ENCODE measurements at regions of chr1 and their contacts with region 1.

Region 1: DNA sequence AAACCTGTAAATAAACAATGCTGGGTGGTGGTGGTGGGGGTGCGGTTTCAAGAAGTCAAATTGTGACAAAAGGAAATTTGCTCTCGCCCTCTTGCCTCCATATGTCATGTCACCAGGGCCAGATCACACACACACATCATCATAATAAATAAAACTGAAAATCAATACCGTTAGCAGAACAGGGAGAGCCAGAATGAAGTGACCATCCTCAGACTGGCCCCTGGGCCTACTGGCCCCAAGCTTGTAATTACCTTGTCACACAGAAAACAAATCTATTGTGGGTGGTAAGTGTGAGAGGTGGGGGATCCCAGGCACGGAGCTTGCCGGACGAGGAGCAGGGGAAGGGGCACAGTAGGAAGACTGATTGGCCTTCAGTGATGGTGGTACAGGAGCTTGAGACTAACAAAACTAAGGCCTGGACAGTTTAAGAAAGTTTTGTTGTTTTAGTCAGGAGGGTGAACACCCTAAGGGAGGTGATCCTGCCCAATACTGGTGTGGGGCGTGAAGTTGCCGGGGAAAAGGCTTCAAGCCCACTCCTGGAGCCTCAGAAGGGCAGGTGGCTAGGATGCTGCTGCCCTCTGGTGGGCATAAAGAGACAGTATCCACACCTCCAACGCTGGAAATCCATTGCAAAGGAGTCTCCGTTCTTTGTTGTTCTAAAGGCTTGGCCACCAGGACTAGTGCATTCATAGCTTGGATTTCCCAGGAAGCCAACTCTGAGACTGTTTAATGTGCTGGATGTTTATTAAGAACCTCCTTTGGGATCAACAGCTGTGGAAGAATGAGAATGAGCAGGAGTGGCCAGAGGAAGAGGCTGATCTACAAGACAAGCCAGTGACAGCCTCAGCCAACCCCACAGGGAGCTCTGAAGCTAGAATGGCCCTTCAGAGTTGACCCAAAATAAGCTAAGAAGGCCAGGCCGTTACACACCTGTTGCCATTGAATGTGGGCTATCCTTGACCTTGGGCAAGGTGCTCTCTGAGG is 8.1 kb upstream of the C1orf216 start:
- DNase-seq: peak; percentile 53
- ATAC-seq: peak; percentile 97
- H3K4me3 ChIP-seq: no peak overlapping the region
- H3K27ac ChIP-seq: no peak overlapping the region
- H3K4me1 ChIP-seq: no peaks in the 10 kb centered on the region
- H3K27me3 ChIP-seq: no peaks in the 10 kb centered on the region
- CTCF ChIP-seq: peak; percentile 91
- EP300 ChIP-seq: no peak
- POLR2A ChIP-seq: no peak
- RAD21 ChIP-seq: peak; percentile 79

Region 2: DNA sequence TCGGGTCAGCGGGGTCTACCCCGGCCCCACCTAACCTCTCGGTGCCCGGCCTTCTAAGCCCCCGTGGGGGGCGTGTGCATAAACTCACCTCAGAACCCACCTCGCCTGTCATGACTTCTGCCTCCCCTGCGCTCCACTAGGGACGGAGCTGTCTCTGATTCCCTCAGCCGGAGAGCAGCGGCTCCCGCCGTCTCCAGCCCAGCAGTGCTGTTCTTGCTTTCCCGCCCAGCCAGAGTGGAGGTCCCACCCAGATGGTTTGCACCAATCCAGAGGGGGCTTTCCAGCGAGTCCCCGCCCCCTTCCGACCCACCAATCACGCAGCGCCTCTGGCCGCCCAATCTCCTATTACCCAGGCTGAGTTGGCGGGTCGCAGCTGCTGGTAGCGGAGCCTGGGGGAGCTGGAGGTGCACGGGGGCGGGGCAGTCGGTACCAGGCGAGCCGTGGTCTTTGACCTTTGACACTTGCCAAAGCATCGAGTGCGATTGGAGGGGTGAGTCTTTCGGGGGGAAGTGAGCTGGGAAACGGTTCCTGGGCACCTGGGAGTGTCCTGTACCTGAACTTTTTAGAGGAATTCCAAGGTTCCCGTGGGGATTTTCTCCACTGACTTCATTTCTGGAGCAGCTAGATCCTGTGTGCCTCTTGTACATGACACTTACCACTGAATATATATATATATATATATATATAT is 43.2 kb after region 1 on chr1 and contains the start of gene CLSPN:
- CTCF ChIA-PET with region 1: no interaction called
- POLR2A ChIA-PET with region 1: interaction called, 3 read pairs
- in situ Hi-C with region 1: no loop called
- intact Hi-C with region 1: loop called (anchors 2 kb)
- DNase-seq: peak; percentile 94
- ATAC-seq: peak; percentile 96
- H3K4me3 ChIP-seq: peak within 1 kb of the TSS; percentile 86 to 99 (median 88)
- H3K27ac ChIP-seq: peak within 1 kb of the TSS; percentile 86
- H3K4me1 ChIP-seq: peaks cover 26% of the 10 kb centered on the region; the same call in 1 of the 2 replicates
- H3K27me3 ChIP-seq: no peaks in the 10 kb centered on the region
- CTCF ChIP-seq: no peak
- EP300 ChIP-seq: peak in 1 of 2 experiments; percentile 20; a peak in 1 of 4 replicates
- POLR2A ChIP-seq: peak; percentile 73 to 94
- RAD21 ChIP-seq: no peak
- total RNA-seq, gene CLSPN: 32.5 and 51.7 TPM in 2 replicates

Measured in HepG2 (cell line).